ENCODE measurements at regions of chr22 and their contacts with region 1.

Region 1: DNA sequence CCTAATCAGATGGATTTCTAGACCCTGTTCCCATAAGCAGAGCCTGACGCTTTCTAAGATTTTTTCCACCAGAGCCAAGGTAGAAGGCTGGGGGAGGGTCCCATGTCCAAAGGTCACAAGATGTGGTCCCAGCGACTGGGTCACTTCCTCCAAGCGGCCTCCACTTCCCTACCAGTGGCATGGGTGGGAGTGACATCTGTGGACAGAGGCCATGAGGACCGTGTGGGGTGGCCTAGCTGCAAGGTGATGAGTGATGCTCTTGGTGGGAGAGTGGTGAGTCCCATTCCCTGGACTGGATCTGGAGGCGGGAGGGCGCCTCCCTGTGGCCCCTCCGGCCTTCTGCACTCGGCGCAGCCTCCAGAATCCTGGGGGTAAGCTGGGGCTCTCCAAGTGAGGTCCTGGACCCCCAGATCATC is 32.4 kb upstream of the PRR5 start:
- DNase-seq: peak; percentile 57
- ATAC-seq: peak; percentile 45
- H3K4me3 Mint-ChIP-seq: peak overlapping the region; percentile 65
- H3K27ac Mint-ChIP-seq: no peak overlapping the region
- H3K4me1 Mint-ChIP-seq: peaks cover 5% of the 10 kb centered on the region; the same call in 1 of the 2 replicates
- H3K27me3 Mint-ChIP-seq: peaks cover 39% of the 10 kb centered on the region
- CTCF ChIP-seq: peak; percentile 48; the same call in 1 of the 2 replicates

Region 2: GRCh38 chr22:44625981-44626687 is 43.4 kb before region 1 on chr22:
- CTCF ChIA-PET with region 1: interaction called, 11 read pairs
- POLR2A ChIA-PET with region 1: no interaction called
- DNase-seq: peak; percentile 84
- ATAC-seq: peak; percentile 75
- H3K4me3 Mint-ChIP-seq: no peak overlapping the region
- H3K27ac Mint-ChIP-seq: no peak overlapping the region
- H3K4me1 Mint-ChIP-seq: no peaks in the 10 kb centered on the region
- H3K27me3 Mint-ChIP-seq: peaks cover 87% of the 10 kb centered on the region
- CTCF ChIP-seq: peak; percentile 96

Region 3: DNA sequence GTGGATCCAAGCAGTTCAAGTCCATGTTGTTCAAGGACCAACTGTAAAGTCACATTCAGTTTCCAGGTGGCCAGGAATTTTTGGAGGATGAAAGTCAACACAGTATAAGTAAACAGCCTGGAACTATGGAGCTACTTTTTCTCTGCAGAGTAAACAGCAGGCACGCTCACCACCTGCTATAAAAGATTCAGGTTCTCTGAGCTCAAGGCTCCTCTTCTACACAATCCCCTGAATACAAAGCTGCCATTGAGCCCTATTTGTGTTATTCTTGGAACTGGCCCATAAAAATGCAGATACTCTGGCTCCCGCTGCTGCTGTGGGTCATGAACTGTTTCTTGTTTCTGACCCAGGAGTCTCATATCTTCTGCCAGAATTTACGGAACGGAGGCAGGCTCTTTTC is 24.5 kb before region 1 on chr22:
- CTCF ChIA-PET with region 1: interaction called, 31 read pairs
- POLR2A ChIA-PET with region 1: no interaction called
- DNase-seq: no peak
- ATAC-seq: no peak
- H3K4me3 Mint-ChIP-seq: no peak overlapping the region
- H3K27ac Mint-ChIP-seq: no peak overlapping the region
- H3K4me1 Mint-ChIP-seq: no peaks in the 10 kb centered on the region
- H3K27me3 Mint-ChIP-seq: no peaks in the 10 kb centered on the region; the same call in 1 of the 2 replicates
- CTCF ChIP-seq: no peak

Measured in WTC11 (cell line).